CD8-positive, alpha-beta T cell (primary cell): ENCODE measurements at regions of chr12 and their contacts with region 1.

Region 1: GRCh38 chr12:32755654-32756475 is at the start of gene YARS2:
- DNase-seq: peak; percentile 64 to 97 (median 88)
- ATAC-seq: peak; percentile 87
- H3K4me3 ChIP-seq: peak within 1 kb of the TSS; percentile 80 to 99
- H3K4me3 Mint-ChIP-seq: peak within 1 kb of the TSS; percentile 88
- H3K27ac ChIP-seq: peak within 1 kb of the TSS; percentile 84 to 95
- H3K27ac Mint-ChIP-seq: peak within 1 kb of the TSS; percentile 94
- H3K4me1 ChIP-seq: peaks cover 15% of the 10 kb centered on the region
- H3K4me1 Mint-ChIP-seq: peaks cover 21% of the 10 kb centered on the region
- H3K27me3 ChIP-seq: no peaks in the 10 kb centered on the region
- H3K27me3 Mint-ChIP-seq: no peaks in the 10 kb centered on the region
- CTCF ChIP-seq: peak; percentile 94
- total RNA-seq, gene YARS2: 12.9 to 13.3 TPM

Region 2: DNA sequence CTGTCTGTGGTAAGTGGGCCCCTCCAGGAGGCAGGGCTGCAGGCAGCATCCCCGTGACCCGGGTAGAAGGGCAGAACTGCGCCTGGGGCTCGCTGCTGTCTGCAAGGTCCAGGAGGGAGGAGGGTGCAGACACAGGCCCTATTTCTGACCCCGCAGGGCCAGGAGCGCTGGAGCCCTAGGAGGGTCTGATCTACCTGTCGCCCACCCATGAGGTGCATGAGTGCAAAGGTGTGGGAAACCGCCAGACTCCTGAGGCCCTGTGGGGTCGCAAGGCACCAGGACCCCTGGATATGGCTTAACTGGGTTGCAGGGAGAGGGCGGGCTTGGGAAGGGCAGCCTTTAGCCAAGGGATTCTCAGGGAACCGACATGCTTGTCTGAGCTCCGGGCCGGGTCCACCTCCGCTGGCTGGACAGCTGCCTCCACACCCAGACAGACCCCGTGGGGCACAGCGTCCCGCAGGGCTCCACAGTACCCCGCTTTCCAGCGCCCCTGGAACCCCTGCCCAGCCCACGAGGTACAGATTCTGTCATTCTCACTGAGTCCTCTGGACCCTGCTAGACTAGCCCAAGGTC is 1902.2 kb before region 1 on chr12:
- CTCF ChIA-PET with region 1: no interaction called
- POLR2A ChIA-PET with region 1: no interaction called
- intact Hi-C with region 1: loop called in 1 of 2 experiments (anchors 2 kb)
- DNase-seq: no peak
- ATAC-seq: no peak
- H3K4me3 ChIP-seq: no peak overlapping the region
- H3K4me3 Mint-ChIP-seq: no peak overlapping the region
- H3K27ac ChIP-seq: no peak overlapping the region
- H3K27ac Mint-ChIP-seq: no peak overlapping the region
- H3K4me1 ChIP-seq: no peaks in the 10 kb centered on the region
- H3K4me1 Mint-ChIP-seq: peaks cover 6% of the 10 kb centered on the region
- H3K27me3 ChIP-seq: no peaks in the 10 kb centered on the region
- H3K27me3 Mint-ChIP-seq: peaks cover 2% of the 10 kb centered on the region
- CTCF ChIP-seq: no peak

Region 3: GRCh38 chr12:31650927-31651326 is 1104.9 kb before region 1 on chr12:
- CTCF ChIA-PET with region 1: interaction called, 14 read pairs
- POLR2A ChIA-PET with region 1: interaction called, 4 read pairs
- intact Hi-C with region 1: loop called (anchors 1 to 5 kb)
- DNase-seq: no peak
- ATAC-seq: no peak
- H3K4me3 ChIP-seq: no peak overlapping the region
- H3K4me3 Mint-ChIP-seq: no peak overlapping the region
- H3K27ac ChIP-seq: no peak overlapping the region
- H3K27ac Mint-ChIP-seq: no peak overlapping the region
- H3K4me1 ChIP-seq: peaks cover 6% of the 10 kb centered on the region
- H3K4me1 Mint-ChIP-seq: peaks cover 12% of the 10 kb centered on the region
- H3K27me3 ChIP-seq: no peaks in the 10 kb centered on the region
- H3K27me3 Mint-ChIP-seq: no peaks in the 10 kb centered on the region
- CTCF ChIP-seq: no peak

Region 4: GRCh38 chr12:32455607-32456071 is 300.2 kb before region 1 on chr12:
- CTCF ChIA-PET with region 1: interaction called, 4 read pairs
- POLR2A ChIA-PET with region 1: no interaction called
- intact Hi-C with region 1: loop called (anchors 5 to 10 kb)
- DNase-seq: peak in 3 of 9 experiments; percentile 14 to 69 (median 50)
- ATAC-seq: no peak
- H3K4me3 ChIP-seq: no peak overlapping the region
- H3K4me3 Mint-ChIP-seq: peak overlapping the region; percentile 24
- H3K27ac ChIP-seq: no peak overlapping the region
- H3K27ac Mint-ChIP-seq: no peak overlapping the region
- H3K4me1 ChIP-seq: no peaks in the 10 kb centered on the region
- H3K4me1 Mint-ChIP-seq: peaks cover 2% of the 10 kb centered on the region
- H3K27me3 ChIP-seq: no peaks in the 10 kb centered on the region
- H3K27me3 Mint-ChIP-seq: no peaks in the 10 kb centered on the region
- CTCF ChIP-seq: peak; percentile 66

Region 5: GRCh38 chr12:32548691-32549281 is 207.1 kb before region 1 on chr12:
- CTCF ChIA-PET with region 1: no interaction called
- POLR2A ChIA-PET with region 1: no interaction called
- intact Hi-C with region 1: no loop called
- DNase-seq: no peak
- ATAC-seq: no peak
- H3K4me3 ChIP-seq: no peak overlapping the region
- H3K4me3 Mint-ChIP-seq: no peak overlapping the region
- H3K27ac ChIP-seq: no peak overlapping the region
- H3K27ac Mint-ChIP-seq: no peak overlapping the region
- H3K4me1 ChIP-seq: no peaks in the 10 kb centered on the region
- H3K4me1 Mint-ChIP-seq: no peaks in the 10 kb centered on the region
- H3K27me3 ChIP-seq: no peaks in the 10 kb centered on the region
- H3K27me3 Mint-ChIP-seq: no peaks in the 10 kb centered on the region
- CTCF ChIP-seq: no peak

Region 6: DNA sequence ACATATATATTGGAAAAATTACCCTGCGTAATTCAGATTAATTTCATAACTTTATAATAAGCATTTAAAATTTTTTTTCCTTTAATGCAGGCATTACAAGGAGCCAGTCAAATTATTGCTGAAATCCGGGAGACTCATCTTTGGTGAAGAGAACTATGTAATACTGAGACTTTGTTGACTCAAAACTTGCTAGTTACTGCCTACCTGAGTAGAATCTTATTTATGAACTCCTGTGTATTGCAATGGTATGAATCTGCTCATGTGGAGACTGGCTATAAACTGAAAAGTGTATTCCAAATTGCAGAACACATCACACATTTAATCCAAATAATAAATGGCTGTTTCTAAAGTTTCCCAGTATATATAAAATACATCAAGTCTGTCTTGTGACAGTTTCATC is 12.6 kb before region 1 on chr12:
- CTCF ChIA-PET with region 1: interaction called, 19 read pairs
- POLR2A ChIA-PET with region 1: interaction called, 4 read pairs
- intact Hi-C with region 1: no loop called
- DNase-seq: no peak
- ATAC-seq: no peak
- H3K4me3 ChIP-seq: no peak overlapping the region
- H3K4me3 Mint-ChIP-seq: no peak overlapping the region
- H3K27ac ChIP-seq: no peak overlapping the region
- H3K27ac Mint-ChIP-seq: no peak overlapping the region
- H3K4me1 ChIP-seq: no peaks in the 10 kb centered on the region
- H3K4me1 Mint-ChIP-seq: peaks cover 13% of the 10 kb centered on the region
- H3K27me3 ChIP-seq: no peaks in the 10 kb centered on the region
- H3K27me3 Mint-ChIP-seq: no peaks in the 10 kb centered on the region
- CTCF ChIP-seq: no peak

Region 7: DNA sequence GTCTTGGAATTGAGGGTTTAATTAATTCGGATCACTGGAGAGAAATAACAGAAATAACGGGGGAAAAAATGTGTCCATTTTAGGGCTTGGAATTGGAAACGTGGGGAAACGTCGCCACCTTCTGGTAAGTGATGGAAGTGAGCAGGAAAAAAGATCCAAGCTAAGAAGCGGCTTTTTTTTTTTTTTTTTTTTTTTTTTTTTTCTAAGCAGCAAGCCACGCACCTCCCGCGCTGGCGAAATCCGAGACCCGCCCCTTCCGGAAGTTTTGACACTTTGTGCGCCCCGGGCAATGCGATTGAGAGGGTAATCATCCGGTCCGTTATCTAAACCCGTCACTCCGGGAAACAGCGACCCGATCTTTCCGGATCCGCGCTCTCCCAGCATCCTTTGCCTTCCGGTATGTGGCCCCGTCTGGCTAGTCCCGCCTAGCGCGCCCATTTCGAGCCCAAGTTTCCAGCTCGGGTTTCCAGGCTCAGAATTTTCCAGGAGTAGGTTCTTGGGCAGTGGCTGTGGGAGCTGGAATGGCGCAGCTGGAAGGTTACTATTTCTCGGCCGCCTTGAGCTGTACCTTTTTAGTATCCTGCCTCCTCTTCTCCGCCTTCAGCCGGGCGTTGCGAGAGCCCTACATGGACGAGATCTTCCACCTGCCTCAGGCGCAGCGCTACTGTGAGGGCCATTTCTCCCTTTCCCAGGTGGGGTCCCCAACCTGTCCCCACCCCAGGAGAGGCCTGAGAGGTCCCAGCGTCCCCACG is 1266.4 kb after region 1 on chr12 and contains the start of gene ALG10:
- CTCF ChIA-PET with region 1: interaction called, 67 read pairs
- POLR2A ChIA-PET with region 1: interaction called, 22 read pairs
- intact Hi-C with region 1: loop called (anchors 1 kb)
- DNase-seq: peak; percentile 91 to 98 (median 96)
- ATAC-seq: peak; percentile 95
- H3K4me3 ChIP-seq: peak within 1 kb of the TSS; percentile 86 to 94
- H3K4me3 Mint-ChIP-seq: peak within 1 kb of the TSS; percentile 95
- H3K27ac ChIP-seq: peak within 1 kb of the TSS; percentile 88 to 97
- H3K27ac Mint-ChIP-seq: peak within 1 kb of the TSS; percentile 97
- H3K4me1 ChIP-seq: peaks cover 12% of the 10 kb centered on the region
- H3K4me1 Mint-ChIP-seq: peaks cover 16% of the 10 kb centered on the region
- H3K27me3 ChIP-seq: no peaks in the 10 kb centered on the region
- H3K27me3 Mint-ChIP-seq: no peaks in the 10 kb centered on the region
- CTCF ChIP-seq: peak; percentile 72
- total RNA-seq, gene ALG10: 8.6 to 9.0 TPM